OCI-LY7 (cell line): ENCODE measurements at regions of chr7 and their contacts with region 1.

Region 1: DNA sequence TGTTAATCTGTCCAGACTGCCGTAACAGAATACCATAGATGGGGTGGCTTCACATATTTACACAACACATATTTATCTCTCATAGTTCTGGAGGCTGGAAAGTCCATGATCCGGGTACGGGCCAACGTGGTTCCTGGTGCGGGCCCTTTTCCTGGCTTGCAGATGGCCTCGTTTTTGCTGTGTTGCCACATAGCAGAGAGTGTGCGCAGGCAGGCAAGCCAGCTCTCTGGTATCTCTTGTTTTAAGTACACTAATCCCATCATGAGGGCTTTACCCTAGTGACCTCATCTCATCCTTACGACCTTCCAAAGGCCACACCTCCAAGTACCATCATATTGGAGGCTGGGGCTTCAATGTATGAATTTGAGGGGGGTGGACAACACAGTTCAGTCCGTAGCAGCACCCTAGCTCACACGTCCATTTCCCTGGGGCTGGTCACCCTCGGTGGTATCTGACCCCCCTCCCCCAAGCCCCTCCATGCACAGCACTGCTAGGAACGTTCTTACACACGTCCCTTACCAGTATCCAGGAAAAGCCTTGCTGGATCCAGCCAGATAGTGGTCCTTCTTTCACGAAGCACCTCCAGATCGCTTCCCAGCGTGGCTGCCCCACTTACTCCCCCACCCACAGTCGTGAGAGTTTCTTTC is 21.5 kb downstream of the CUX1 start:
- DNase-seq: no peak
- H3K4me3 ChIP-seq: no peak overlapping the region
- H3K27ac ChIP-seq: no peak overlapping the region
- H3K4me1 ChIP-seq: peaks cover 45% of the 10 kb centered on the region
- CTCF ChIP-seq: no peak

Region 2: GRCh38 chr7:101823096-101823495 is 15.9 kb before region 1 on chr7:
- CTCF ChIA-PET with region 1: no interaction called
- POLR2A ChIA-PET with region 1: interaction called, 13 read pairs
- intact Hi-C with region 1: no loop called
- DNase-seq: no peak
- H3K4me3 ChIP-seq: peak overlapping the region; percentile 78
- H3K27ac ChIP-seq: peak overlapping the region; percentile 72
- H3K4me1 ChIP-seq: peaks cover 87% of the 10 kb centered on the region
- CTCF ChIP-seq: no peak

Region 3: GRCh38 chr7:101828301-101829020 is 10.5 kb before region 1 on chr7:
- CTCF ChIA-PET with region 1: no interaction called
- POLR2A ChIA-PET with region 1: interaction called, 13 read pairs
- intact Hi-C with region 1: no loop called
- DNase-seq: no peak
- H3K4me3 ChIP-seq: no peak overlapping the region
- H3K27ac ChIP-seq: no peak overlapping the region
- H3K4me1 ChIP-seq: peaks cover 67% of the 10 kb centered on the region
- CTCF ChIP-seq: no peak